ENCODE measurements at regions of chr11 and their contacts with region 1.

Region 1: DNA sequence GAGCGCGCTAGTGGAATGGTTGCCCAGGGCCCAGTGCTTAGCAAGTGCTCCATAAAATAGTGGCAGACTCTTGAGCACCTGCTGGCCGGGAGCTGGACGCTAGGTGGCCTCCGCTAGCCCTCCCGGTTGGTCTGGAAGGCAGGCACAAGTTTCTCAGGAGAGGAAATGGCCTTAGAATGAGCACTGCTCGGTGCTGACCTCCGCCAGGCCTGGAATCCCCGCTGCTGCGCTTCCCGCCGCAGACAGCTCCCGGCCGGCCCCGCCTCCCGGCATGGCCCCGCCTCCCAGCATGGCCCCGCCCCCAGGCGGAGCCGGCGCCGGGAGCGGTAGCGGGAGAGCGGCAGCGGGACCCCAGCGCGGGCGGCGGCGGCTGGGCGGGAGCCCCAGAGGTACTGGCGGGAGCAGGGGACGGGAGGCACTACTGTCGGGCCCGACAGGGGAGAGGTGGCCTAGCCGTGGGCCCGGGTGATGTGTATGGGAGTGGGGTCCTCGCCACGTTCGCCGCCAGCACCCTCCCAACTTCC is at the start of gene SIPA1:
- DNase-seq: peak; percentile 46 to 89 (median 70)
- ATAC-seq: peak; percentile 43
- H3K4me3 ChIP-seq: peak within 1 kb of the TSS; percentile 99
- H3K4me3 Mint-ChIP-seq: peak within 1 kb of the TSS; percentile 94
- H3K27ac ChIP-seq: peak within 1 kb of the TSS; percentile 97 to 98
- H3K27ac Mint-ChIP-seq: peak within 1 kb of the TSS; percentile 98
- H3K4me1 ChIP-seq: peaks cover 62% of the 10 kb centered on the region
- H3K4me1 Mint-ChIP-seq: peaks cover 44% of the 10 kb centered on the region
- H3K27me3 ChIP-seq: no peaks in the 10 kb centered on the region
- H3K27me3 Mint-ChIP-seq: no peaks in the 10 kb centered on the region
- CTCF ChIP-seq: no peak
- total RNA-seq, gene SIPA1: 397 to 405 TPM

Region 2: GRCh38 chr11:65487413-65488272 is 150.2 kb before region 1 on chr11:
- CTCF ChIA-PET with region 1: no interaction called
- POLR2A ChIA-PET with region 1: no interaction called
- intact Hi-C with region 1: no loop called
- DNase-seq: peak in 1 of 9 experiments; percentile 56
- ATAC-seq: peak; percentile 41
- H3K4me3 ChIP-seq: no peak overlapping the region
- H3K4me3 Mint-ChIP-seq: peak overlapping the region; percentile 42
- H3K27ac ChIP-seq: no peak overlapping the region
- H3K27ac Mint-ChIP-seq: peak overlapping the region; percentile 7
- H3K4me1 ChIP-seq: peaks cover 17% of the 10 kb centered on the region
- H3K4me1 Mint-ChIP-seq: peaks cover 19% of the 10 kb centered on the region
- H3K27me3 ChIP-seq: no peaks in the 10 kb centered on the region
- H3K27me3 Mint-ChIP-seq: no peaks in the 10 kb centered on the region
- CTCF ChIP-seq: no peak

Region 3: GRCh38 chr11:65546217-65546958 is 91.5 kb before region 1 on chr11:
- CTCF ChIA-PET with region 1: no interaction called
- POLR2A ChIA-PET with region 1: interaction called, 5 read pairs
- intact Hi-C with region 1: loop called in 1 of 2 experiments (anchors 1 kb)
- DNase-seq: peak; percentile 96 to 100 (median 98)
- ATAC-seq: peak; percentile 89
- H3K4me3 ChIP-seq: peak overlapping the region; percentile 49 to 50
- H3K4me3 Mint-ChIP-seq: peak overlapping the region; percentile 82
- H3K27ac ChIP-seq: peak overlapping the region; percentile 62 to 74
- H3K27ac Mint-ChIP-seq: peak overlapping the region; percentile 95
- H3K4me1 ChIP-seq: peaks cover 39% of the 10 kb centered on the region
- H3K4me1 Mint-ChIP-seq: peaks cover 48% of the 10 kb centered on the region
- H3K27me3 ChIP-seq: no peaks in the 10 kb centered on the region
- H3K27me3 Mint-ChIP-seq: no peaks in the 10 kb centered on the region
- CTCF ChIP-seq: no peak

Region 4: GRCh38 chr11:65625628-65626342 is 12.1 kb before region 1 on chr11:
- CTCF ChIA-PET with region 1: interaction called, 40 read pairs
- POLR2A ChIA-PET with region 1: interaction called, 6 read pairs
- intact Hi-C with region 1: no loop called
- DNase-seq: peak in 8 of 9 experiments; percentile 24 to 83 (median 63)
- ATAC-seq: peak; percentile 88
- H3K4me3 ChIP-seq: no peak overlapping the region
- H3K4me3 Mint-ChIP-seq: no peak overlapping the region
- H3K27ac ChIP-seq: no peak overlapping the region
- H3K27ac Mint-ChIP-seq: peak overlapping the region; percentile 55
- H3K4me1 ChIP-seq: peaks cover 5% of the 10 kb centered on the region
- H3K4me1 Mint-ChIP-seq: peaks cover 9% of the 10 kb centered on the region
- H3K27me3 ChIP-seq: no peaks in the 10 kb centered on the region
- H3K27me3 Mint-ChIP-seq: no peaks in the 10 kb centered on the region
- CTCF ChIP-seq: peak; percentile 66

Region 5: DNA sequence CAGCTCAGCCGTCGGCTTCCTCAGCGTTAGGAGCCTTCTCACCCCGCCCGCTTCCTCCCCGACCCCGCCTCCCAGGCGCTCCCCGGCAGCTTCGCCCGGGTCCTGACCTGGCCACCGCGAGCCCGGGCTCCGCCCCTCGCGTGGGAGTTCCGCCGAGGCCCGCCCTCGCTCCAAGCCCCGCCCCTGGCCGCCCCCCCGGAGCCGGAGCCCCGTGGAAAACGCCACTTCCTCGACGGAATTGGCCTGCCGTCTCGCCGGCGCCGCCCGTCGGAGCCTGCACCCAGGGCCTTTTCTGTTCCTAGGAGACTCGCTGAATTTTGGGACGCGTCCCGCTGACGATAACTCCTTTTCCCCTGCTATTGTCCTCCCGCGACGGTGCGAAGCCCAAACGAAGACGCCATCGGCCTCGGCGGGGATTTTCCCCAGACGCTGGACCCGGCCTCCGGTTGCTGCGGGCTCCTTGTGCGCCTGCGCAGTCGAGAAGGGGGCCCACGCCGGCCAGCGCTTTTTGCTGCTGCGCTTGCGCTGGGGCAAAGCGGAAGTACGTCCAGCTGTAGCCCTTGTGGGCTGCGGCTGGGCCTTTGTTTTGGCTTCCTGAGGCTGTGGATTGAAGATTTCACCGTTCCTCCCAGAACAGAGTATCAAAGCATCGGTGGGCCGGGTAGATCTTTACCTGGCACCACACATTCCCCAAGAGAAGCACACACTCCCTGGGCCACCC is 14.8 kb after region 1 on chr11:
- CTCF ChIA-PET with region 1: interaction called, 7 read pairs
- POLR2A ChIA-PET with region 1: interaction called, 156 read pairs
- intact Hi-C with region 1: loop called (anchors 1 kb)
- DNase-seq: peak; percentile 93 to 99 (median 97)
- ATAC-seq: peak; percentile 80
- H3K4me3 ChIP-seq: peak overlapping the region; percentile 69 to 83
- H3K4me3 Mint-ChIP-seq: peak overlapping the region; percentile 86
- H3K27ac ChIP-seq: peak overlapping the region; percentile 94 to 100
- H3K27ac Mint-ChIP-seq: peak overlapping the region; percentile 98
- H3K4me1 ChIP-seq: peaks cover 27% of the 10 kb centered on the region
- H3K4me1 Mint-ChIP-seq: peaks cover 45% of the 10 kb centered on the region
- H3K27me3 ChIP-seq: no peaks in the 10 kb centered on the region
- H3K27me3 Mint-ChIP-seq: no peaks in the 10 kb centered on the region
- CTCF ChIP-seq: no peak

Region 6: GRCh38 chr11:65662799-65663638 is 25.2 kb after region 1 on chr11 and contains the start of gene RELA:
- CTCF ChIA-PET with region 1: interaction called, 5 read pairs
- POLR2A ChIA-PET with region 1: interaction called, 29 read pairs
- intact Hi-C with region 1: loop called in 1 of 2 experiments (anchors 1 kb)
- DNase-seq: peak; percentile 79 to 95 (median 89)
- ATAC-seq: peak; percentile 83
- H3K4me3 ChIP-seq: peak within 1 kb of the TSS; percentile 77 to 88
- H3K4me3 Mint-ChIP-seq: peak within 1 kb of the TSS; percentile 86
- H3K27ac ChIP-seq: peak within 1 kb of the TSS; percentile 92 to 98
- H3K27ac Mint-ChIP-seq: peak within 1 kb of the TSS; percentile 92
- H3K4me1 ChIP-seq: peaks cover 27% of the 10 kb centered on the region
- H3K4me1 Mint-ChIP-seq: peaks cover 38% of the 10 kb centered on the region
- H3K27me3 ChIP-seq: no peaks in the 10 kb centered on the region
- H3K27me3 Mint-ChIP-seq: no peaks in the 10 kb centered on the region
- CTCF ChIP-seq: no peak
- total RNA-seq, gene RELA: 380 to 384 TPM

Region 7: DNA sequence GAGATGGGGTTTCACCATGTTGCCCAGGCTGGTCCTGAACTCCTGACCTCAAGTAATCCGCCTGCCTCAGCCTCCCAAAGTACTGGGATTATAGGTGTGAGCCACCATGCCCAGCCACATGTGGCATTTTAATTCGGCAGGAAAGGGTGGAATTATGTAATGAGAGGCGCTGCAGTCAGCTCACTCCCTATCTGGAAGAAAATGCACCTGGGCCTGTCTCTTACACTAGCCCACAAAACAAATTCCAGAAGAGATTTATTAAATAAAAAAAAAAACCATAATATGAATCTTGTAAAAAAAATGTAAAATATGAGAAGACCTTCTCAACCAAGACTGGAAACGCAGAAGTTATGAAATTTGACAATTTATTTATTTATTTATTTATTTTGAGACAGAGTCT is 66.0 kb after region 1 on chr11:
- CTCF ChIA-PET with region 1: no interaction called
- POLR2A ChIA-PET with region 1: no interaction called
- intact Hi-C with region 1: no loop called
- DNase-seq: no peak
- ATAC-seq: no peak
- H3K4me3 ChIP-seq: no peak overlapping the region
- H3K4me3 Mint-ChIP-seq: no peak overlapping the region
- H3K27ac ChIP-seq: no peak overlapping the region
- H3K27ac Mint-ChIP-seq: no peak overlapping the region
- H3K4me1 ChIP-seq: no peaks in the 10 kb centered on the region
- H3K4me1 Mint-ChIP-seq: no peaks in the 10 kb centered on the region
- H3K27me3 ChIP-seq: no peaks in the 10 kb centered on the region
- H3K27me3 Mint-ChIP-seq: peaks cover 2% of the 10 kb centered on the region
- CTCF ChIP-seq: no peak